Calu3 (cell line): ENCODE measurements at regions of chr7 and their contacts with region 1.

Region 1: GRCh38 chr7:3300651-3301378 is at the start of gene SDK1:
- DNase-seq: peak; percentile 99
- H3K4me3 Mint-ChIP-seq: peak within 1 kb of the TSS; percentile 75
- H3K27ac Mint-ChIP-seq: peak within 1 kb of the TSS; percentile 70
- H3K4me1 Mint-ChIP-seq: peaks cover 19% of the 10 kb centered on the region
- H3K27me3 Mint-ChIP-seq: no peaks in the 10 kb centered on the region
- CTCF ChIP-seq: peak; percentile 94
- total RNA-seq, gene SDK1: 19.7 and 20.0 TPM in 2 replicates

Region 2: DNA sequence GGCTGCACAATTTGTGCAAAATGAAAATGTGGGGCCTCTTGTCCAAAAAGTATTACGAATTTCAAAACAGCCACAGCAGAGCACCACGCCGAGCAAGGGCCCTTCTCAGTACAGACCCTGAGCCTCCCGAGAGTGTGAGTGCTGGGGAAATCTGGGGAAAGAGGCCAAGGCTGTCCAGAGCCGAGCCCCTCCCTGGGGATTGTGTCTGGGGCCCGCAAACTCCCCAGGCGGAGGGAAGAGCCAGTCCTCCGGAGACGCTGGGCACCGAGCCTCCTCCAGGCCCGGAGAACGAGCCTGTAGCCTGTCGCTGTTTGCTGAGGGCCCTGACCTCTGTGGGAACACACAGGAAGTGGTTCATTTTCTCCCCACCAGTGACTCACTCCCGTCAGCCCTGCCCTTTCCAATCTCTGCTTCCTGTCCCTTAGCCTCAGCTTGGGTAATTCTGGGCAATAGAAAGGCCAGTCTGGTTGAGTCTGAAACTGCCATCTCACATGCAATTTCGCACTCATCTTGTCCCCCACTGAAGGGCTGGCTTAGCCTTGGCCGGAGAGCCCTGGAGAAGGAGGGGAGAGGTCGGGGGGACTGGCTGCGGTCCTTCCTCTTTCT is 437.3 kb before region 1 on chr7:
- CTCF ChIA-PET with region 1: interaction called, 11 read pairs
- intact Hi-C with region 1: no loop called
- DNase-seq: peak; percentile 96
- H3K4me3 Mint-ChIP-seq: peak overlapping the region; percentile 72
- H3K27ac Mint-ChIP-seq: peak overlapping the region; percentile 100
- H3K4me1 Mint-ChIP-seq: peaks cover 44% of the 10 kb centered on the region
- H3K27me3 Mint-ChIP-seq: no peaks in the 10 kb centered on the region
- CTCF ChIP-seq: no peak

Region 3: GRCh38 chr7:3065724-3066143 is 235.1 kb before region 1 on chr7:
- CTCF ChIA-PET with region 1: no interaction called
- intact Hi-C with region 1: loop called (anchors 10 kb)
- DNase-seq: peak; percentile 67
- H3K4me3 Mint-ChIP-seq: no peak overlapping the region
- H3K27ac Mint-ChIP-seq: no peak overlapping the region
- H3K4me1 Mint-ChIP-seq: no peaks in the 10 kb centered on the region
- H3K27me3 Mint-ChIP-seq: peaks cover 49% of the 10 kb centered on the region
- CTCF ChIP-seq: peak; percentile 62

Region 4: GRCh38 chr7:3649250-3649649 is 348.4 kb after region 1 on chr7:
- CTCF ChIA-PET with region 1: interaction called, 10 read pairs
- intact Hi-C with region 1: no loop called
- DNase-seq: peak; percentile 28
- H3K4me3 Mint-ChIP-seq: no peak overlapping the region
- H3K27ac Mint-ChIP-seq: no peak overlapping the region
- H3K4me1 Mint-ChIP-seq: no peaks in the 10 kb centered on the region
- H3K27me3 Mint-ChIP-seq: no peaks in the 10 kb centered on the region
- CTCF ChIP-seq: no peak

Region 5: GRCh38 chr7:3760651-3761050 is 459.8 kb after region 1 on chr7:
- CTCF ChIA-PET with region 1: no interaction called
- intact Hi-C with region 1: loop called (anchors 5 kb)
- DNase-seq: no peak
- H3K4me3 Mint-ChIP-seq: peak overlapping the region; percentile 40
- H3K27ac Mint-ChIP-seq: peak overlapping the region; percentile 45
- H3K4me1 Mint-ChIP-seq: peaks cover 54% of the 10 kb centered on the region
- H3K27me3 Mint-ChIP-seq: no peaks in the 10 kb centered on the region
- CTCF ChIP-seq: no peak